GM12878 (cell line): ENCODE measurements at regions of chr10 and their contacts with region 1.

Region 1: DNA sequence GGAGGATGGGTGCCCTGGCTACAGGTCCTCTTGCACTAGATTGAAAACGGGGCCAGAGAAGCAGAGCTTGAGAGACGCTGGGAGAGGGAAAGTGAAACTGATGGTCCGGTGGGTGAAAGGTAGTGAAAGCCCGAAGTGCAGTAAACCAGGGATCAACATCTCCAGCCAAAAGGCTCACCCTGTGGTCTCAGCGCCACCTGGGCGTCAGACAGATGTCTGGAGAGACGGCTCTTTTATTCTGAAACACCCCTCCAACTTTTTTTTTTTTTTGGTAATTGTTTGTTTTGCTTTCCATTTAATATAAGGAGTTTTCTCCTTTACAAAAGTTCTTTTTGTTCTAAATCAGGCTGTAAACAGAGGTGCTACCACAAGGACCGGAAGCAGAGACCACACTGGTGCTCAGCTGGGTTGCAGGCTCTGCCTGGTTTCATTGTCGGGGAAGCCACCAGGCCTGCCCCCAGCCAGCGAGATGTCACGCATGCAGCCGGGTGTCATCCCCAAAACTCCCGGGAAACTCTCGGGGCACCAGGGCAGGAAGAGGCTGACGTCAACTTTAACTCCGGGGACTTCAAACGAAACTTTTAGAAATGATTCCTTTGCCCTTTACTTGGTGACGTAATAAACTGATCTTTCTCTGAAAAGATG is 11.2 kb downstream of the IL2RA start:
- DNase-seq: peak; percentile 89
- ATAC-seq: peak; percentile 75
- H3K4me3 ChIP-seq: peak overlapping the region; percentile 48; the same call in 1 of the 2 replicates
- H3K27ac ChIP-seq: peak overlapping the region; percentile 77
- H3K4me1 ChIP-seq: peaks cover 53% of the 10 kb centered on the region
- H3K27me3 ChIP-seq: no peaks in the 10 kb centered on the region
- CTCF ChIP-seq: peak; percentile 24 to 52 (median 41); a peak in 4 of 6 replicates
- EP300 ChIP-seq: peak; percentile 94 to 96
- POLR2A ChIP-seq: peak; percentile 67
- RAD21 ChIP-seq: peak; percentile 74

Region 2: GRCh38 chr10:4623757-4624420 is 1427.0 kb before region 1 on chr10:
- CTCF ChIA-PET with region 1: no interaction called
- POLR2A ChIA-PET with region 1: no interaction called
- RAD21 ChIA-PET with region 1: no interaction called
- SMC1A ChIA-PET with region 1: no interaction called
- in situ Hi-C with region 1: no loop called
- intact Hi-C with region 1: no loop called
- DNase-seq: no peak
- ATAC-seq: no peak
- H3K4me3 ChIP-seq: no peak overlapping the region
- H3K27ac ChIP-seq: no peak overlapping the region
- H3K4me1 ChIP-seq: no peaks in the 10 kb centered on the region
- H3K27me3 ChIP-seq: no peaks in the 10 kb centered on the region
- CTCF ChIP-seq: no peak
- EP300 ChIP-seq: no peak
- POLR2A ChIP-seq: no peak
- RAD21 ChIP-seq: no peak

Region 3: DNA sequence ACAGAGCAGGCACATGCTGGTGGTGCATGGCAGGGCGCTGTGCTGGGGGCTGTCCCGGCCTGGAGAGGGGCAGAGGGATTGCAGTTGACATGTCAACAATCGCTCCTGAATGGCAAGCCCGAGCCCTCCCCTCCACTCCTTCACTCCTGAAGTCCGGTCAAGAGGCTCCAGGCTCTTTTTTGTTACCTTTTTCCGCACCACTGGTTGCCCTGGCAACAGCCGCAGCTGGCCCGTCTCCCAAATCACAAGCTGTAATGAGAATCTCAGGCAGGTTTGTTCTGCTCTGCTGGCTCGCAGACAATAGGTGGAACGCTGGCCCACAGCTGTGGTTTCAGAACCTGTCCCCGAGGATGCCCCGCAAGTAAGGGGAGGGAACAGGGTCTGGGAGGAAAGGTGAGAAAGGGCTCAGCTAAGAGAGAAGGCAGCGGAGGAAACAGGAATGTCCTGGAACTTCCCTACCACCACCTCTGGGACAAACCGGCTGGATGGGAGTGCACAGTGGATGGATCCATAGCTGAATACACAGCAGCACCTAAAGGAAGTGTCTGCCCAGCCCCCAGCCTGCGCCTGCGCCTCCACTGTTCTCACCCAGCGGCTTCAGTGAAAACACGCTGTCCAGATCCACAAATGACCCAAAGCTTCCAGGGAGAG is 467.3 kb before region 1 on chr10:
- CTCF ChIA-PET with region 1: no interaction called
- POLR2A ChIA-PET with region 1: no interaction called
- RAD21 ChIA-PET with region 1: no interaction called
- SMC1A ChIA-PET with region 1: no interaction called
- in situ Hi-C with region 1: no loop called
- intact Hi-C with region 1: loop called (anchors 5 kb)
- DNase-seq: peak; percentile 37
- ATAC-seq: peak; percentile 73
- H3K4me3 ChIP-seq: 0 out of 2 replicates have a peak overlapping the region, but pooled peaks have one; percentile 3
- H3K27ac ChIP-seq: peak overlapping the region; percentile 28
- H3K4me1 ChIP-seq: peaks cover 51% of the 10 kb centered on the region
- H3K27me3 ChIP-seq: peaks cover 0 to 1% of the 10 kb centered on the region in 2 experiments; a peak in 2 of 4 replicates
- CTCF ChIP-seq: no peak
- EP300 ChIP-seq: peak; percentile 66 to 67; a peak in 3 of 4 replicates
- POLR2A ChIP-seq: no peak
- RAD21 ChIP-seq: no peak

Region 4: DNA sequence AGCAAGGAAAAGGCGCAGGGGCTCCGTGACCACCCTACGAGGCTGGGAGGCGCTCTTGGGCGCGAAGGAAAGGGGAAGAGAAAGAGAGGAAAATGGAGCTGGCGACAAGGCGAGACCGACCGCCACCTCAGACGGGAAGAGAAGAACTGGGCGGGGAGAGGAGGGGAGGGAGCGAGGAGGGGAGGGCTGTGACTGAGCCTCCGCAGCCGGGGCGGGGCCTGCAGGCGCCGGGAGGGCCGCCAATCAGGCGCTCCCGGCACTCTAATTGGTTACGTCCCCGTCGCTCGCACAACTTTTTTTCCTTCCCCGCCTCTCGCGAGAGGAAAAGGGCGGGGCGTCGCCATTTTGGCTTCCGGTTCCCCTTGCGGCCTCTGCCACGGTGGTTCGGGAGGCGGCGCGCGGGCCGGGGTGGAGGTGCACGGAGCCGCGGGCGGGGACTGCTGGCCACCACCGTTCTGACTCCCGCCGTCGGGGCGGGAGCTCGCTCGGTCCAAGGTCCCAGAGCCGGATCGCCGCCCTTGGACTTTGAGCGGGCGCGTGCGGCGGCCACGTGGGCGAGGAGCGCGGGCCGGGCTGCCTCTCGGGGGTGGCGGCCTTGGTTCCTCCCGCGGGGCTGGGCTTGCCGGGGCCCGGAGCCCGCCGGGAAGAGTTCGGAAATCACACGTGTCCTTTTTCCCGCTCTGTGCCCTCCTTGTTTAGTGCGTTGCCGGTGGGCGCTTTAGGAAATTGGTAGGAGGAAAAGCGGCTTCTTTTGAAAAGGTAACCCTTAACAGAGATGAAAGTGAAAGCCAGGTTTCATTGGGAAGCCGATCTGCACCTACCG is 237.4 kb before region 1 on chr10 and contains the start of gene GDI2:
- CTCF ChIA-PET with region 1: no interaction called
- POLR2A ChIA-PET with region 1: interaction called, 3 read pairs
- RAD21 ChIA-PET with region 1: interaction called, 3 read pairs
- SMC1A ChIA-PET with region 1: interaction called, 3 read pairs
- in situ Hi-C with region 1: no loop called
- intact Hi-C with region 1: loop called (anchors 2 kb)
- DNase-seq: peak; percentile 82
- ATAC-seq: peak; percentile 85
- H3K4me3 ChIP-seq: peak within 1 kb of the TSS; percentile 91
- H3K27ac ChIP-seq: peak within 1 kb of the TSS; percentile 97
- H3K4me1 ChIP-seq: peaks cover 41% of the 10 kb centered on the region
- H3K27me3 ChIP-seq: no peaks in the 10 kb centered on the region
- CTCF ChIP-seq: peak in 1 of 3 experiments; percentile 8; a peak in 1 of 6 replicates
- EP300 ChIP-seq: no peak
- POLR2A ChIP-seq: peak; percentile 90
- RAD21 ChIP-seq: no peak
- polyA plus RNA-seq, gene GDI2: 264 to 334 TPM

Region 5: DNA sequence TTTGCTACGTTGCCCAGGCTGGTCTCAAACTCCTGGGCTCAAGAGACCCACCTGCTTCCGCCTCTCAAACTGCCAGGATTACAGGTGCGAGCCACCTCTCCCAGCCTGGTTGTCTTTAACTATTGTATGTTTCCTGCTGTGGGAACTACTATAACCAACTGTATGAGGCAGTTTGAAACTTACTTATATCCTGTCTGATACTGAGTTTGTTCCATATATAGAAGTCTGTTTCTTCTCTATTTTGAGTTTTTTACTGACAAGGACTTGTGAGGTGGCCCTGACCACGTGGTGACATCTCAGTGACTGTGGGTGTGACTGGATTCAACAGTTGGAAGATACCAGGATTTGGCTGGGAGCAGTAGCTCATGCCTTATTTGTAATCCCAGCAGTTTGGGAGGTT is 146.7 kb before region 1 on chr10:
- CTCF ChIA-PET with region 1: no interaction called
- POLR2A ChIA-PET with region 1: no interaction called
- RAD21 ChIA-PET with region 1: no interaction called
- SMC1A ChIA-PET with region 1: no interaction called
- in situ Hi-C with region 1: no loop called
- intact Hi-C with region 1: loop called (anchors 2 kb)
- DNase-seq: peak; percentile 68
- ATAC-seq: peak; percentile 96
- H3K4me3 ChIP-seq: 0 out of 2 replicates have a peak overlapping the region, but pooled peaks have one; percentile 39
- H3K27ac ChIP-seq: peak overlapping the region; percentile 91
- H3K4me1 ChIP-seq: peaks cover 18% of the 10 kb centered on the region
- H3K27me3 ChIP-seq: no peaks in the 10 kb centered on the region
- CTCF ChIP-seq: no peak
- EP300 ChIP-seq: 0 out of 4 replicates have a peak, but pooled peaks of 1 of the 2 experiments have one; percentile 11
- POLR2A ChIP-seq: no peak
- RAD21 ChIP-seq: no peak

Region 6: GRCh38 chr10:6002809-6003510 is 48.0 kb before region 1 on chr10:
- CTCF ChIA-PET with region 1: no interaction called
- POLR2A ChIA-PET with region 1: no interaction called
- RAD21 ChIA-PET with region 1: no interaction called
- SMC1A ChIA-PET with region 1: no interaction called
- in situ Hi-C with region 1: no loop called
- intact Hi-C with region 1: no loop called
- DNase-seq: no peak
- ATAC-seq: peak; percentile 68
- H3K4me3 ChIP-seq: no peak overlapping the region
- H3K27ac ChIP-seq: no peak overlapping the region
- H3K4me1 ChIP-seq: peaks cover 2% of the 10 kb centered on the region; the same call in 1 of the 2 replicates
- H3K27me3 ChIP-seq: peaks cover 0 to 1% of the 10 kb centered on the region in 2 experiments; a peak in 1 of 4 replicates
- CTCF ChIP-seq: no peak
- EP300 ChIP-seq: no peak
- POLR2A ChIP-seq: no peak
- RAD21 ChIP-seq: no peak

Region 7: GRCh38 chr10:6014241-6014761 is 36.6 kb before region 1 on chr10:
- CTCF ChIA-PET with region 1: interaction called, 101 read pairs
- POLR2A ChIA-PET with region 1: interaction called, 12 read pairs
- RAD21 ChIA-PET with region 1: interaction called, 41 read pairs
- SMC1A ChIA-PET with region 1: interaction called, 53 read pairs
- in situ Hi-C with region 1: no loop called
- intact Hi-C with region 1: loop called (anchors 1 kb)
- DNase-seq: peak; percentile 30
- ATAC-seq: peak; percentile 91
- H3K4me3 ChIP-seq: no peak overlapping the region
- H3K27ac ChIP-seq: no peak overlapping the region
- H3K4me1 ChIP-seq: no peaks in the 10 kb centered on the region
- H3K27me3 ChIP-seq: no peaks in the 10 kb centered on the region; a peak in 1 of 4 replicates
- CTCF ChIP-seq: peak; percentile 68 to 82 (median 77)
- EP300 ChIP-seq: no peak
- POLR2A ChIP-seq: no peak
- RAD21 ChIP-seq: peak; percentile 89

Region 8: GRCh38 chr10:6062101-6062771 is 11.3 kb after region 1 on chr10 and contains the start of gene IL2RA:
- CTCF ChIA-PET with region 1: interaction called, 12 read pairs
- POLR2A ChIA-PET with region 1: interaction called, 16 read pairs
- RAD21 ChIA-PET with region 1: interaction called, 11 read pairs
- SMC1A ChIA-PET with region 1: interaction called, 18 read pairs
- in situ Hi-C with region 1: no loop called
- intact Hi-C with region 1: no loop called
- DNase-seq: no peak
- ATAC-seq: peak; percentile 65
- H3K4me3 ChIP-seq: peak within 1 kb of the TSS; percentile 43; the same call in 1 of the 2 replicates
- H3K27ac ChIP-seq: peak within 1 kb of the TSS; percentile 14; the same call in 1 of the 2 replicates
- H3K4me1 ChIP-seq: peaks cover 28% of the 10 kb centered on the region
- H3K27me3 ChIP-seq: no peaks in the 10 kb centered on the region
- CTCF ChIP-seq: no peak
- EP300 ChIP-seq: no peak
- POLR2A ChIP-seq: no peak
- RAD21 ChIP-seq: no peak
- polyA plus RNA-seq, gene IL2RA: 3.3 to 5.1 TPM

Region 9: DNA sequence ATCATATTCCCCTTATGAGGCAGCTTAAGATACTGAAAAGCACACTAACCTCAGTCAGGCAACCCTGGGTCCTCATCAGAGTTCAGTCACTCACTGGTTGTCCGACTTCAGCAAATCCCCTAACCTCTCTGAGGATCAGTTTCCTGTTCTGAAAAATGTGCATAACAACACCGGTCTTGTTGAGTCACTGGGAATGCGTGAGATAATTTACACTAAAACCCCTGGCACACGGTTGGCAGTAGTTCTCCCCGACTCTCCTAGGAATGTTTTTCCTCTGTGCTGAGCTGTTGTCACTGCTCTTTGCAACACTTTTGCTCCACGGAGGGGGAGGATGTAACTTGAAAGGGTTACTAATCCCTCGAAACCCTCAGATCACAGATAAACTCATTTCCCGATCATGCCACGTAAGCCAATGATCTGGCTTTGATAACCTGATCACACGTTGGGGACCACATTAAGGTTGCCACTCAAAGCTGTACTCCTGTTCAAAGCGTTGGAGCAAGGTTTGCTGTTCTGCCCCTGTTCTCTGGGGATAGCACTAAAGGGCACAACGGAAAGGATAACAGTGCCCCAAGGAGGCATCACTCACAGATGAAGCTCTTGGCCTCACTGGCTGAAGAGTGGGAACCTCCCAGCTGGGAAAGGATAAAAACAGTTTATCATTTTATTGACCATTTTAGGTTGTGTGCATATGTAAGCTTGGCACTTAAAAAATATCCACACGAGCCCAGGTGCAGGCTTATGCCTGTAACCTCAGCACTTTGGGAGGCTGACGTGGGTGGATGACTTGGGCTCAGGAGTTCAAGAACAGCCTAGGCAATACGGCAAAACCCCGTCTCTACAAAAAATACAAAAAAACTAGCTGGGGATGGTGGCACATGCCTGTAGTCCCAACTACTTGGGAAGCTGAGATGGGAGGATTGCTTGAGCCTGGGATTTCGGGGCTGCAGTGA is 32.9 kb after region 1 on chr10:
- CTCF ChIA-PET with region 1: interaction called, 95 read pairs
- POLR2A ChIA-PET with region 1: interaction called, 8 read pairs
- RAD21 ChIA-PET with region 1: interaction called, 21 read pairs
- SMC1A ChIA-PET with region 1: interaction called, 61 read pairs
- in situ Hi-C with region 1: no loop called
- intact Hi-C with region 1: loop called (anchors 1 kb)
- DNase-seq: no peak
- ATAC-seq: no peak
- H3K4me3 ChIP-seq: no peak overlapping the region
- H3K27ac ChIP-seq: no peak overlapping the region
- H3K4me1 ChIP-seq: no peaks in the 10 kb centered on the region
- H3K27me3 ChIP-seq: peaks cover 0 to 6% of the 10 kb centered on the region in 2 experiments; a peak in 2 of 4 replicates
- CTCF ChIP-seq: no peak
- EP300 ChIP-seq: no peak
- POLR2A ChIP-seq: no peak
- RAD21 ChIP-seq: no peak

Region 10: DNA sequence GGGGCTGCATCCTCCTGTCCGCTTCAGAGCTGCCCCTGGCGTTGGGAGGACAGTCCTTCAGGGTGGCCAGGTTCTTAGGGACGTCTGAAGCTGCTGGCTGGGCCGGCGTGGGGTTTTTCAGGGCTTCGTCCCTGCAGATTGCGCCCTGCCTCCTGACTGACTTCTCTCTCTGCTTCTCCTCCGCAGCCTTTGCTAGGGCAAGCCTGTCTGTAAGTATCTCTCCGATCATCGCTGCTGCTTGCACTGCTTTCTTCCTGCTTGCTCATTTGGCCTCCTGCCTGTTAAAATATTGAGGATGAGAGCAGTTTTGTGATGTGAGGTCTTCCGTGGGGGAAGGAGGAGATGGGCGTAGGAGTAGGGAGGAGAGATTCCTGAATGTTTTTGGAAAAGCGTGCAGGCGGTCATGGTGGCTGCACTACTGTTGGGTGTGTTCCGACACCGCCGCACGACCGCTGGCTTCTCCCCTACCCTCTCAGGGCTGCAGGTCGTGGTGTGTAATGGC is 177.1 kb after region 1 on chr10:
- CTCF ChIA-PET with region 1: no interaction called
- POLR2A ChIA-PET with region 1: no interaction called
- RAD21 ChIA-PET with region 1: no interaction called
- SMC1A ChIA-PET with region 1: no interaction called
- in situ Hi-C with region 1: no loop called
- intact Hi-C with region 1: no loop called
- DNase-seq: no peak
- ATAC-seq: no peak
- H3K4me3 ChIP-seq: no peak overlapping the region
- H3K27ac ChIP-seq: no peak overlapping the region
- H3K4me1 ChIP-seq: no peaks in the 10 kb centered on the region
- H3K27me3 ChIP-seq: no peaks in the 10 kb centered on the region
- CTCF ChIP-seq: no peak
- EP300 ChIP-seq: no peak
- POLR2A ChIP-seq: no peak
- RAD21 ChIP-seq: no peak